MCF 10A (cell line): ENCODE measurements at regions of chr9 and their contacts with region 1.

Region 1: GRCh38 chr9:85741875-85742629 is at the start of gene AGTPBP1:
- DNase-seq: peak; percentile 94
- H3K4me3 Mint-ChIP-seq: peak within 1 kb of the TSS; percentile 83
- H3K27ac Mint-ChIP-seq: peak within 1 kb of the TSS; percentile 96
- H3K4me1 Mint-ChIP-seq: peaks cover 15% of the 10 kb centered on the region
- H3K27me3 Mint-ChIP-seq: peaks cover 14% of the 10 kb centered on the region
- CTCF ChIP-seq: no peak
- total RNA-seq, gene AGTPBP1: 27.2 and 30.8 TPM in 2 replicates

Region 2: GRCh38 chr9:85484235-85484634 is 257.8 kb before region 1 on chr9:
- CTCF ChIA-PET with region 1: no interaction called
- POLR2A ChIA-PET with region 1: no interaction called
- intact Hi-C with region 1: no loop called
- DNase-seq: no peak
- H3K4me3 Mint-ChIP-seq: no peak overlapping the region
- H3K27ac Mint-ChIP-seq: no peak overlapping the region
- H3K4me1 Mint-ChIP-seq: no peaks in the 10 kb centered on the region
- H3K27me3 Mint-ChIP-seq: peaks cover 26% of the 10 kb centered on the region
- CTCF ChIP-seq: no peak

Region 3: GRCh38 chr9:85688361-85688760 is 53.7 kb before region 1 on chr9:
- CTCF ChIA-PET with region 1: no interaction called
- POLR2A ChIA-PET with region 1: no interaction called
- intact Hi-C with region 1: no loop called
- DNase-seq: no peak
- H3K4me3 Mint-ChIP-seq: no peak overlapping the region
- H3K27ac Mint-ChIP-seq: no peak overlapping the region
- H3K4me1 Mint-ChIP-seq: no peaks in the 10 kb centered on the region
- H3K27me3 Mint-ChIP-seq: no peaks in the 10 kb centered on the region
- CTCF ChIP-seq: no peak

Region 4: DNA sequence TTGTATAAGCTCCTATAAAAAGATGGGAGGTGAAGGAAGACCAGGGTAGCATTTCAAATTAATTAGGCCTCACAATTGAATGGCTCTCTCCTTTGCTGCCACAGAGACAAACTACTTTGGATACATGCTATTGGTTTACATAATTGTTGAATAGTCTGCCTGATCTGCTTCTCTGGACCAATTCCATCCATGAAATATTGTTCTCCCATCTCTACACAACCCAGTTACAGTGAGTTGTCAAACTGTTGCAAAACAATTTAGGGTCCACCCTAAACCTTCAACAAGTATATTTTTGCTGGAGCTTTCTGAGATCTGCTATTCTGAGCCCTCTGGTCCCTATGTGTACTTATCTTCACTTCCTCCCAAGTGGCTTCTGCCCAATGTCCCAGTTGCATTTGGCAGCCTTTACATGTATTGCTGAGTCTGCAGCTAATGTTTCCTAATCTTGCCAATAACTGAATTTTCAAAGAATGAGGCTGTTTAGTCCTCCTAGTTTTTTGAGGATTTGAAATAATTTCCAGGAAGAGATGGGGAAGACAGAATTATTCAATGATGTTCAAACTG is 39.2 kb before region 1 on chr9:
- CTCF ChIA-PET with region 1: interaction called, 8 read pairs
- POLR2A ChIA-PET with region 1: interaction called, 5 read pairs
- intact Hi-C with region 1: loop called (anchors 2 kb)
- DNase-seq: no peak
- H3K4me3 Mint-ChIP-seq: no peak overlapping the region
- H3K27ac Mint-ChIP-seq: no peak overlapping the region
- H3K4me1 Mint-ChIP-seq: no peaks in the 10 kb centered on the region
- H3K27me3 Mint-ChIP-seq: no peaks in the 10 kb centered on the region
- CTCF ChIP-seq: no peak

Region 5: DNA sequence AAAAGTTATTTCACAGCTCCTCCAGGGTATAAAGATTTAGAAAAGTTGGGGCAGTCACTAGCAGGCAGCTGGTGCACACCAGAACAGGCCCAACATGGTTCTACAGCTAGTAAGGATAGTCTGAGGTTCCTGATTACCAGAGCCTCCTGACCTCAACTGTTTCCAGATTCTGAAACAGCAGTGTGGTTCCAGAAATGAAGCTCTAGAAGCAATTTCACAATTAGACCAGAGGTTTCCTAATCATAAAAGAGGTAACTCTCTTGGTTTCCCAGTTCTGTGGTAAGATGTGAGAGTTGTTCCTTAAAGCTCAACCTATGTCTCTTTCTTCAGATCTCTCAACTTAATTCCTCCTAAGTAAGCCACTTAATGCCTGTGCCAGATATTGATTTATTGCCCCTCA is 12.2 kb before region 1 on chr9:
- CTCF ChIA-PET with region 1: interaction called, 4 read pairs
- POLR2A ChIA-PET with region 1: interaction called, 21 read pairs
- intact Hi-C with region 1: no loop called
- DNase-seq: peak; percentile 8
- H3K4me3 Mint-ChIP-seq: no peak overlapping the region
- H3K27ac Mint-ChIP-seq: no peak overlapping the region
- H3K4me1 Mint-ChIP-seq: no peaks in the 10 kb centered on the region
- H3K27me3 Mint-ChIP-seq: no peaks in the 10 kb centered on the region
- CTCF ChIP-seq: no peak